MCF 10A (cell line): ENCODE measurements at regions of chr1 and their contacts with region 1.

Region 1: DNA sequence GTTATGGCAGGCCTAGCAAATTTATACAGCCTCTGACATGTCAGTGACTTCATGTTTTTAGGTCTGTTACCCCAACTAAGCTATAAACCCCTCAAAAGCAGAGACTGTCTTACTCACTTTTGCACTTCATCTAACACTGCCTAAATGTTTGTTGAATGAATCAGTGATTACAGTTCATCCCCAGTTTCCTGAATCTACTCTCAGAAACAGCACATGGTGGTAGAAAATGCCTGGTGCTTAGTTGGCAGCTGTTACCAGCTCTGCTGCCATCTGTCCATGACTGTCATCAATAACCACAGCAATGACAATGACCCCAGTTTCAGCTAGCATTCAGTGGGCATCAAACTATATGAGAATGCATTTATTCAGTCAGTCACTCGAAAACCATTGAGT is 110.5 kb upstream of the SERBP1 start:
- DNase-seq: no peak
- H3K4me3 Mint-ChIP-seq: no peak overlapping the region
- H3K27ac Mint-ChIP-seq: no peak overlapping the region
- H3K4me1 Mint-ChIP-seq: peaks cover under 1% of the 10 kb centered on the region
- H3K27me3 Mint-ChIP-seq: no peaks in the 10 kb centered on the region
- CTCF ChIP-seq: no peak

Region 2: GRCh38 chr1:67552336-67552759 is 11.6 kb after region 1 on chr1:
- CTCF ChIA-PET with region 1: interaction called, 30 read pairs
- POLR2A ChIA-PET with region 1: interaction called, 5 read pairs
- intact Hi-C with region 1: no loop called
- DNase-seq: peak; percentile 50
- H3K4me3 Mint-ChIP-seq: no peak overlapping the region
- H3K27ac Mint-ChIP-seq: no peak overlapping the region
- H3K4me1 Mint-ChIP-seq: peaks cover 6% of the 10 kb centered on the region
- H3K27me3 Mint-ChIP-seq: no peaks in the 10 kb centered on the region
- CTCF ChIP-seq: no peak

Region 3: DNA sequence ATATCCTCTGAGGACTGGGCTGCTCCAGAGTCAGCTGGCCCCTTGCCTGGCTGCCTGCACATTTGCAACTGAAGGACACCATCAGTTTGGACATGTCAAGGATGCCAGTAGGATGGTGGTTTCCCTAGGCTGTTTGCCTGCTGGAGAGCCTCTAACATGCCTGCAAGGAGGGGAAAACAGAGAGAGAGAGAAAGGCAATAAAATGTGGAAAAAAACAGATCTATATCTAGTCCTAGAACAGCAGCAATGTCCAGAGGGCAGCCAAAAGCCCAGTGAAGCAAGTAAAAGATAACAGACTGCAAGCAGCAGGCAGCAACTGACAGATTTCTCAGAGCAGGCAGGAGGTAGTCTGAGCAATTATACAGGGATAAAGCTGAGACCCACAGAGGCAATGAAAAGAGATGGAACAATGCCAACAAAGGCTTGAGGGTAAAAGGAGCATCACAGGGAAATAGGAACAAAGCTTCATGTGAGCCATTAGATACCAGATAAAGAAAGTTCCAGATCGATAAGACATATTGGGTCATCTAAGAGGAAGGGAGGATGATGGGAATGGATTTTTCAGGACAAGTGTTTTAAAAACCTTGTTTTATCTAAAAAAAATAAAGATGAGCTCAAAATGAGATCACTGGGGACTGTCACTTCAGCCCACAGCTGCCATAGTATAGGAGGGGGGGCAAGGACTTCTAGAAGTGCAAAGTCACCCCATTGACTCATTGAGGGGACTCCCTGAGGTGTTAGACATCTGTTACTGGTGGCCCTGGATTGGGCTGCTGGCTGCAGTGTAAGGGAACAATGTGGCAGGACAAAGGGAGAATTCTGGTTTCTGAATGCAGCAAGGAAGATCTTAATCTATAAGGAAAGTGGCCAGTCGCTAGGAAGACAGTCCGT is 105.7 kb after region 1 on chr1:
- CTCF ChIA-PET with region 1: no interaction called
- POLR2A ChIA-PET with region 1: no interaction called
- intact Hi-C with region 1: no loop called
- DNase-seq: no peak
- H3K4me3 Mint-ChIP-seq: no peak overlapping the region
- H3K27ac Mint-ChIP-seq: no peak overlapping the region
- H3K4me1 Mint-ChIP-seq: no peaks in the 10 kb centered on the region
- H3K27me3 Mint-ChIP-seq: no peaks in the 10 kb centered on the region
- CTCF ChIP-seq: no peak

Region 4: DNA sequence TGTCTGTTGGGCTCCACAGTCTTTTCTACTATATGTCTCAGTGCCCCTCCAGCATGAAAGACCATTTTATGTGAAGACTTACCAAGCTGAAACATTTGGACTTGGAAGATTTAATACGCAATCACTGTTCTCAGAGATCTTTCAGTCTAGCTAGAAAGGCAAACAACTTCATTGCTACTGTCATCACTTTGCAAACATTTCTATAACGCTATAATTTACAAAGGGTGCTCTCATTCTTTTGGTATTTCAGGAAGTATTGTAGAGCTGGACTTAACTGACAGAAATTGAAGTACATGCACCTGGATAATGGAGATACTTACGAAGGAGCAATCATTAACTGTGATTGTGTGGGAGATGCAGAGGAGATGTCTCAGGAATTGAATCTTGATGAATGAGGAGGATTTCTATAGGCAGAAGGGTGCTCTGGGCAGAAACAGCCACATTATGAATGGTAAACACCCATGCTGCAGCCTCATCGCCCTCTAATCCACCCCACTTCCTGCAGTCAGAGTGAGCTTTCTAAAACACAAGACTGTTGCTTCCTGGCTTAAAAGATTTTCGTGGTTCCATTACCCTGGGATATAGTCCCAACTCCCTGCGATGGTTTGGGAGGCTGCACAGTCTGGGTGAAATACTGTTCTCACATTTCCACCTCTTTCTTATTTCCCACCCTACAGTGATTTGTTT is 367.7 kb after region 1 on chr1:
- CTCF ChIA-PET with region 1: no interaction called
- POLR2A ChIA-PET with region 1: no interaction called
- intact Hi-C with region 1: no loop called
- DNase-seq: no peak
- H3K4me3 Mint-ChIP-seq: no peak overlapping the region
- H3K27ac Mint-ChIP-seq: no peak overlapping the region
- H3K4me1 Mint-ChIP-seq: no peaks in the 10 kb centered on the region
- H3K27me3 Mint-ChIP-seq: no peaks in the 10 kb centered on the region
- CTCF ChIP-seq: no peak

Region 5: DNA sequence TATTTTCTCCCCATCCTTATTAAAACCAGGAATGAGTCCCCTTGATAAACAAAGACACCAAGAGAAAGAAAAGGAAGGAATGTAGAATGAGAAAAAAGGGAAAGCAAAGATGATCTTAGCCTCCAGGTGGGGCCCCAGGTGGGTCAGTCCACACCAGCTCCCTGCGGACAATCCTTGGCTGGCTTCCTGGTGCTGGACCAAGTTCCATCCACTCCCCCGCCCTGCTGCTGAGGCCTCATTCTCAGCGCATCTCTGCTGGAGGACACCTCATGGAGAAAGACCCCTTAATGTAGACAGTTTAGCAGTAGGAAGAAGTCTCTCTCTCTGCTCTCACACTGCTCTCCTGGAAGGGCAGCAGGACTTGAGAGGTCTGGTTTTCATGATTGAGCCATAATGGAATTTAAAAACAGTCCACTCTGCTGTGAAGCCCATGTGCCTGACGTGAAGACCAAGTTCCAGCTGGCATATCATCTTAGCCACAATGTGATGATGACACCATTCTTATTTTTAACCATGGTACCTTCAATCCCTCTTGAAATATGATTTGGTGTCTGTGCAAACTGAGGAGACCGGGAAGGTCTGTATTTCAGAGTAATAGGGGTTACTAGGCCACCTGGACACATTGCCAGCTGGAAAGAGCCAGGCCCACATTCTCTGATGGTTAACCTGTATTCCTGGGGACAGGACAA is 608.5 kb after region 1 on chr1:
- CTCF ChIA-PET with region 1: no interaction called
- POLR2A ChIA-PET with region 1: no interaction called
- intact Hi-C with region 1: no loop called
- DNase-seq: no peak
- H3K4me3 Mint-ChIP-seq: no peak overlapping the region
- H3K27ac Mint-ChIP-seq: no peak overlapping the region
- H3K4me1 Mint-ChIP-seq: no peaks in the 10 kb centered on the region
- H3K27me3 Mint-ChIP-seq: no peaks in the 10 kb centered on the region
- CTCF ChIP-seq: no peak